ENCODE measurements at regions of chr9 and their contacts with region 1.

Region 1: GRCh38 chr9:70060883-70061507 is 17.3 kb downstream of the MAMDC2 start:
- DNase-seq: no peak
- ATAC-seq: no peak
- H3K4me3 ChIP-seq: no peak overlapping the region
- H3K27ac ChIP-seq: no peak overlapping the region
- H3K4me1 ChIP-seq: peaks cover 0 to 10% of the 10 kb centered on the region in 2 donors
- H3K27me3 ChIP-seq: no peaks in the 10 kb centered on the region
- CTCF ChIP-seq: no peak
- POLR2A ChIP-seq: no peak

Region 2: GRCh38 chr9:70160686-70161600 is 99.9 kb after region 1 on chr9:
- in situ Hi-C with region 1: loop called in 1 of 4 experiments (anchors 25 kb)
- intact Hi-C with region 1: no loop called
- DNase-seq: no peak
- ATAC-seq: no peak
- H3K4me3 ChIP-seq: no peak overlapping the region
- H3K27ac ChIP-seq: peak overlapping the region in 3 of 4 donors; percentile 8 to 20 (median 19)
- H3K4me1 ChIP-seq: peaks cover 15 to 31% of the 10 kb centered on the region in 2 donors
- H3K27me3 ChIP-seq: no peaks in the 10 kb centered on the region
- CTCF ChIP-seq: no peak
- POLR2A ChIP-seq: no peak